PC-9 (cell line): ENCODE measurements at regions of chr7 and their contacts with region 1.

Region 1: GRCh38 chr7:79298145-79298760 is 155.2 kb downstream of the MAGI2 start:
- DNase-seq: peak; percentile 25 to 51
- H3K4me3 ChIP-seq: no peak overlapping the region
- H3K27ac ChIP-seq: no peak overlapping the region
- H3K4me1 ChIP-seq: no peaks in the 10 kb centered on the region
- H3K27me3 ChIP-seq: no peaks in the 10 kb centered on the region
- CTCF ChIP-seq: peak; percentile 83

Region 2: GRCh38 chr7:79598351-79598750 is 300.1 kb after region 1 on chr7:
- CTCF ChIA-PET with region 1: no interaction called
- POLR2A ChIA-PET with region 1: no interaction called
- intact Hi-C with region 1: loop called (anchors 5 kb)
- DNase-seq: no peak
- H3K4me3 ChIP-seq: no peak overlapping the region
- H3K27ac ChIP-seq: no peak overlapping the region
- H3K4me1 ChIP-seq: no peaks in the 10 kb centered on the region
- H3K27me3 ChIP-seq: no peaks in the 10 kb centered on the region
- CTCF ChIP-seq: no peak

Region 3: GRCh38 chr7:79741684-79742083 is 443.4 kb after region 1 on chr7:
- CTCF ChIA-PET with region 1: interaction called, 7 read pairs
- POLR2A ChIA-PET with region 1: no interaction called
- intact Hi-C with region 1: loop called (anchors 1 kb)
- DNase-seq: no peak
- H3K4me3 ChIP-seq: no peak overlapping the region
- H3K27ac ChIP-seq: no peak overlapping the region
- H3K4me1 ChIP-seq: no peaks in the 10 kb centered on the region
- H3K27me3 ChIP-seq: no peaks in the 10 kb centered on the region
- CTCF ChIP-seq: peak; percentile 66

Region 4: DNA sequence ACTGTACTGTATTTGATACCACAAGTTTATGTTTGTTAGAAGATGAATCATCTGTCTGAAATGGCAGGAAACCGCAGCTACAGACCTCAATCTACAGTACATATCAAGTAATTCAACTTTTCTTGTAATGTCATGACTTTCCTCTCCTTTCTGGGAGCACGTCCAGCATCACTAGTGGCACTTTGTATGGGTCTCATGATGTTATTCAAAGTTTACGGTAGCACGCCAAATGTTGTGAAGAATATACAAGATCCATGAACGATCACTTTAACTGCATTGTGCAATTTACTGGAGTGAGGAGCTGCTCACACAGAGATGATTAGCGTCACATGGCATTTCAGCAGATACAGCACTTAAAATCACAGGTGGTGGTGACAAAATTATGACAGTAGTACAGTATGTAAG is 578.6 kb after region 1 on chr7:
- CTCF ChIA-PET with region 1: no interaction called
- POLR2A ChIA-PET with region 1: no interaction called
- intact Hi-C with region 1: loop called (anchors 10 kb)
- DNase-seq: peak; percentile 37 to 43
- H3K4me3 ChIP-seq: no peak overlapping the region
- H3K27ac ChIP-seq: no peak overlapping the region
- H3K4me1 ChIP-seq: no peaks in the 10 kb centered on the region
- H3K27me3 ChIP-seq: 0 out of 2 replicates have a peak, but pooled peaks cover 5% of the 10 kb centered on the region
- CTCF ChIP-seq: no peak